Cardiac septum (tissue), 1 donor: ENCODE measurements at regions of chr1 and their contacts with region 1.

Region 1: DNA sequence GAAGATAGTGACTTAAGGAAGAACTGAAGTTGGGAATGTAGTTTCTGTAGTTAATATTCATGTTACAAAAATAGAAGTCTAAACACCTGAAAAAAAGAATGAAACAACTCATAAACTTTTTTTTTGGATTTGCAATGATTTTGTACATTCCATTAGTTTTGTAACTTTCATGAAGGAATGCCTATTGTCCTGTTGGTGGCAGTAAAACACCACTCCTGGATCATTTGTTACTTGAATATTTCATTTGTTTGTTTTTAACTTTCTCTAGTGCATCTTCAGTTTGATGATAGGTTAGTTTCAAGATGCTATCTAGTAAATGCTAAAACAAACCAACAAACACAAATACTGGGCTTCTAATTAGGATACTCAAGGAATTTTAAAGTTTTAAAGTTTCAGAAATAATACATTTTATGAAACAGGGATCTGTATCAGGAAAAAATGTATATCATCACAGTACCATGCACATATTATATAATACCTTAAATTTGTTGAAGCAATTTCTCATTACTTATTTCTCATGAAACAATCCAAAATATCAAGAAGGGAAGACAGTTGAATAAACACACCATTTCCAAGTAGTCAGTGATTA is 229.7 kb upstream of the CACYBP start:
- DNase-seq: no peak

Region 2: GRCh38 chr1:174984952-174985351 is 214.9 kb after region 1 on chr1:
- intact Hi-C with region 1: loop called (anchors 1 kb)
- DNase-seq: no peak